ENCODE measurements at regions of chr11 and their contacts with region 1.

Region 1: DNA sequence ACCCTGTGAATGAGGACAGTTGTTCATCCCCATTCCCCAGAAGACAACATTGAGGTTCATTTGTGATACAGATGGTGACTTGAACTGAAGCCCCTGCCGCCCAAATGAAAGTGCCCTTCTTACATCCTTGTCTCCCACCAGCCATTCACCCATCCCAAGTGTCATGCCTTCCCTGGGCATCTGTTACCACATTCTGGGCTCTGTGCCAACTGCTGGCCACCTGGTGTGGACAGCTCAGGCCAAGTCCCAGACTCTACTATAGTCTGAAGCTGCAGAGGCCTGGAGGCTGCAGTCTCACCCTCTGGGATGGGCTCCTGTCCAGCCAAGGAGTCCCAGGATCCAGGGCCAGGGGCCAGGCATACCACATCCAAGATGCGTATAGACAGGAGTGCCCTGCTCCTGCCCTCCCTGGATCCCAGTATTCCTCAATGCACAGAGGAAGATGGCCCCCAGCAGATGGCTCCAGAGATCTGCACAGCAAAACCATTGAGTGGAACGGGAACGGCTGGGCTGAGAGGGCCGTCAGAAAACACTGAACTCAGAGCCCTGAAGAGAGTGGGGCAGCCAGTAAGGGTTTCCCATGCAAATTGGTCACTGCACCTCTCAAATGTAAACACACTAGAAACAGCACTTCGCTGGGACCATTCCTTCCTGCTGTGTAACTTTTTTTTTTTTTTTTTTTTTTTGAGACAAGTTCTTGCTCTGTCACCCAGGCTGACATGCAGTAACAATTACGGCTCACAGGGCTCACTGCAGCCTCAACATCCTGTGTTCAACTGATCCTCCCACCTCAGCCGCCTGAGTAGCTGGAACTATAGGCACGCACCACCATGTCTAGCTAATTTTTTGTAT is 22.8 kb downstream of the ARRB1 start:
- DNase-seq: peak; percentile 76
- ATAC-seq: peak; percentile 82
- H3K4me3 ChIP-seq: peak overlapping the region in 1 of 2 experiments; percentile 10; a peak in 1 of 4 replicates
- H3K27ac ChIP-seq: peak overlapping the region; percentile 96
- H3K4me1 ChIP-seq: peaks cover 83% of the 10 kb centered on the region
- H3K27me3 ChIP-seq: no peaks in the 10 kb centered on the region
- CTCF ChIP-seq: peak; percentile 95; the same call in 1 of the 2 replicates

Region 2: DNA sequence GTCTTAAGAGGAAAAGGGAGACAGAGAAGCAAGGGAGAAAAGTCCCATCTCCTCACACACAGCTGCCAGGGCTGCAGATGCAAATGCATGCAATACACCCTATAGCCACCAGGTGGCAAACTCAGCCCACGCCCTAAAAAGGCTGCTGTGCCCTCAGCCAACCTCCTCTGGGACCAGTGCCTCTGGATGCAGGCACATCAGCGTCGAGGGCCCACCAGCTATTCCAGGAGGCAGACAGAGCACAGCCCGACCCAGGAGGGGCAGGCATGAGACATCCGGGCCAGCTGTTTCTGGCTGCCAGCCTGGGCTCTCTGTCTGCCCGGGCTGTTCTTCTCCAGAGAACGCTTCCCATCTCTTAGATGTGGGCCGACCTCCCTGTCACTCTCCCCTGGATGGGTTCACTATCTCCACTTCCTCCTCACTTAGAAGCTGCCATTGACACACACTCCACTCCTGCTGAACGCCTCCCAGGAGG is 48.4 kb before region 1 on chr11:
- CTCF ChIA-PET with region 1: interaction called, 3 read pairs
- POLR2A ChIA-PET with region 1: no interaction called
- in situ Hi-C with region 1: no loop called
- intact Hi-C with region 1: loop called (anchors 2 kb)
- DNase-seq: peak; percentile 61
- ATAC-seq: peak; percentile 90
- H3K4me3 ChIP-seq: no peak overlapping the region
- H3K27ac ChIP-seq: peak overlapping the region; percentile 64
- H3K4me1 ChIP-seq: peaks cover 14% of the 10 kb centered on the region; the same call in 1 of the 2 replicates
- H3K27me3 ChIP-seq: no peaks in the 10 kb centered on the region
- CTCF ChIP-seq: peak; percentile 99

Region 3: GRCh38 chr11:75351791-75352587 is 23.3 kb after region 1 on chr11:
- CTCF ChIA-PET with region 1: interaction called, 10 read pairs
- POLR2A ChIA-PET with region 1: interaction called, 3 read pairs
- in situ Hi-C with region 1: no loop called
- intact Hi-C with region 1: no loop called
- DNase-seq: no peak
- ATAC-seq: peak; percentile 65
- H3K4me3 ChIP-seq: peak overlapping the region; percentile 60 to 85
- H3K27ac ChIP-seq: peak overlapping the region; percentile 71
- H3K4me1 ChIP-seq: peaks cover 46% of the 10 kb centered on the region
- H3K27me3 ChIP-seq: no peaks in the 10 kb centered on the region
- CTCF ChIP-seq: no peak

Region 4: DNA sequence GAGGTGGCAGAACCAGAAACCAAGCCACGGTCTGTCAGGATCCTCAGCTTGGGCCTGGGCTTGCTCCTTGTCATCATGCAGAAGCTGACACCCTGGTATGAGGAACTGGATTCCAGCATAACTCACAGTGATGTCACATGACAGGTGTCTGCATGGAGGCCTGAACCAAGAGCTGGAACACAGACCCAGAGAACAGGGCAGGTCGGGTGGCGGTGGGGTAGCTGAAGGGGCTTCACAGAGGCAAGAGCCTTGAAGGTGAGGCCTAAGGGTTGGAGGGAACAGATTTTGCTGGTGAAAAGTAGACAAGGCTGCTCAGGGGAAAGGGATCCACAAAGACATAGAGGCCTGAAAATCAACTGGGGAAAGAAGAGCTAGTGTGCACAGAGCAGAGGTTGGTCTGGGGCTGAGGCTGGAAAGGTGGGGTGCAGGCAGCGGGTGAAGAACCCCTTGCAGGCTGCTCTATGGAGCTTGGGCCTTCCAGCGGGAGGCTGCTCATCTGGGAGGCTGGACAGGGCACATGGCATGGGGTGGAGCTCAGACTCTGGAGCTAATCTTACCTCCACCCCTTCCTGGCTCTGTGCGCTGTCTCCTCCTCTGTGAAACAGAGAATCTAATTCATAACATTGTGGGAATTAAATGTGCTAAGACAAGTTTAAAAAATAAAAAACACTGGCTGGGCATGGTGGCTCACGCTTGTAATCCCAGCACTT is 52.2 kb after region 1 on chr11:
- CTCF ChIA-PET with region 1: interaction called, 14 read pairs
- POLR2A ChIA-PET with region 1: interaction called, 3 read pairs
- in situ Hi-C with region 1: no loop called
- intact Hi-C with region 1: loop called (anchors 1 kb)
- DNase-seq: no peak
- ATAC-seq: 0 out of 2 replicates have a peak, but pooled peaks have one; percentile 27
- H3K4me3 ChIP-seq: no peak overlapping the region
- H3K27ac ChIP-seq: peak overlapping the region; percentile 74
- H3K4me1 ChIP-seq: peaks cover 36% of the 10 kb centered on the region
- H3K27me3 ChIP-seq: no peaks in the 10 kb centered on the region
- CTCF ChIP-seq: no peak

Region 5: GRCh38 chr11:75399344-75400145 is 70.9 kb after region 1 on chr11 and contains the start of gene RPS3:
- CTCF ChIA-PET with region 1: no interaction called
- POLR2A ChIA-PET with region 1: interaction called, 15 read pairs
- in situ Hi-C with region 1: no loop called
- intact Hi-C with region 1: no loop called
- DNase-seq: peak; percentile 69
- ATAC-seq: peak; percentile 97
- H3K4me3 ChIP-seq: peak within 1 kb of the TSS; percentile 78 to 85
- H3K27ac ChIP-seq: peak within 1 kb of the TSS; percentile 99
- H3K4me1 ChIP-seq: peaks cover 29% of the 10 kb centered on the region
- H3K27me3 ChIP-seq: no peaks in the 10 kb centered on the region
- CTCF ChIP-seq: no peak; the same call in 1 of the 2 replicates
- total RNA-seq, gene RPS3: 2,945 TPM